ENCODE measurements at regions of chrX and their contacts with region 1.

Region 1: DNA sequence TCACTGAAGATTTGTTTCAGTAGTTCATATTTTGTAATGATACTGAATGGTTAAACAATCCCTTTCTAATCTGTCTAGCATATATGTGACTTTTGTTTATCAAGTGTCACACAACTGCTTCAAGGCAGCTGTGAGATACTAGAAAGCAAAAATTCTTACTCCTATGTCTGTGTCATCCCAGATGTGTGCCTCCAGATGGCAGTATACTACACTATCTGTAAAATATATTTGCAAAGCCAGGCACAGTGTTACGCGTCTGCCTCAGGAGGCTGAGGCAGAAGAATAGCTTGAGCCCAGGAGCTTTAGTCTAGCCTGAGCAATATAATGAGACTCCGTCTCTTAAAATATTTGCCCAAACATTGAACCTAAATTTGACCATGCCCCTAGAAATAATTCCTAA is 4.0 kb downstream of the NUDT10 start:
- DNase-seq: peak; percentile 7
- H3K4me3 Mint-ChIP-seq: no peak overlapping the region
- H3K27ac Mint-ChIP-seq: no peak overlapping the region
- H3K4me1 Mint-ChIP-seq: peaks cover 4% of the 10 kb centered on the region
- H3K27me3 Mint-ChIP-seq: peaks cover 12% of the 10 kb centered on the region

Region 2: DNA sequence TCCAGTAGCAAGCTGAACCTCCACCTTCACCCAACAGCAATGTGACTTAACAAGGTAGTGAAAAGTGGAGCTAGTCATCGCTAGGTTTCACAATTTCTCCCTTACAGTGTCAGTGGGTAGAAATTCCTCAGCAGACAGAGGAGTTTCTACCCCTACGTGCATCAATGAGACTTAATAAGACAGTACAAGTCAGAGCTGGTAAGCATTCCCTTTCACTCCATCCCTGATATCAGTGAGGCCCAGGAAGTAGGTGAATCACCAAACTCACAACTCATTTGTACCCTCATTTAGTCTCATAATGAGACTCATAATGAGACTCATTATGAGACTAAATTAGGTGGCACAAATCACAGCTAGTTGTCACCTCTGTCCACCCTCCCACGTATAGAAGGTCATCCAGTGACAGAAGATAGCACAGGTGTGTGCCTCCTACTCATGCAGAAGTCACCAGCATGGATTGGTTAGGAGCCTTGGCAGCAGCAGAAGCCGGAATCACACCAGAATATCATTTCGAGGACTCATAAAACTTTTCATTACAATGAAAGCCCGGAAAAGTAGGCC is 54.7 kb before region 1 on chrX:
- intact Hi-C with region 1: no loop called
- DNase-seq: no peak
- H3K4me3 Mint-ChIP-seq: no peak overlapping the region
- H3K27ac Mint-ChIP-seq: no peak overlapping the region
- H3K4me1 Mint-ChIP-seq: no peaks in the 10 kb centered on the region
- H3K27me3 Mint-ChIP-seq: no peaks in the 10 kb centered on the region

Region 3: DNA sequence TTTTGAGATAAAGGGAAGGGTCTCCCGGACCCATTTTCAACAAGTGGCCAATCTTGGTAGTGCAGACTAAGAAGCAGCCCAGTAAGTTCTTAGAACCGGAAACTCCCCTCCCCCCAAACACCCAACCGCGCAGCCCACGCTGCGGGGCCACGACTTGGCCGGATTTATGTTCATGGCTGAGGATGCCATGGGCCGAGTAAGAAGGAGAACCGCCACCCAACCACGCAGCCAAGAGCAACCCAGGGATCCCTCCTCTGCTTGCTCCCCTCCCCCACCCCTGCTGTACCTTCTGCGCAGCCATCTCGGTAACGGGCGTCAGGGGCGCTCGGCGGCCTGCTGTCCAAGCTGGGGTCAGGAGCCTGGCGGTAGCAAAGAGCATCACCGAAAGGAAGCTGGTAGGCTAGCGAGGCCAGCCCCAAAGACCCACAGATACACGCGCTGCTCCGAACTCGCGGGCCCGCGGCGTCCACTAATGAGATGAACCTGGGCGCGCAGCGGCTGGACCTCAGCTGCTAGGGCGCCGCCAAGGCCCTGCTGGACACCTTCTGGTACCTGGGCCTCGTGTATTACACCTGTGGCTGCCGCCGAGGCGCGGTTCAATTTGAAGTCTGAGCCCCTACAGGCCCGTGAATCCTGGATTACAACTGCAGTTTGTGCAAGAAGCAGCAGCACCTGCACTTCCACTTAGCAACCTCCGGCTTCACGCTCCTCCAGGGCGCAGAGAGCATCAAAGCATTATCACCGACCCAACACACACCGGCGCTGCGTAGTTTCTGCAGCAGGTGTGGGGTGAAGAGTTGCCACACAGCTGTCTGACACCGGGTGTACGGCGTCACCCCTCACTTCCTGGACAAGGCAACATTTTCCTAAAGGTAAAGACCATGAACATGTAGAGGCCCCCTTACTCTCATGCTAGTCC is 59.5 kb after region 1 on chrX:
- intact Hi-C with region 1: loop called (anchors 5 kb)
- DNase-seq: peak; percentile 29
- H3K4me3 Mint-ChIP-seq: peak overlapping the region; percentile 76
- H3K27ac Mint-ChIP-seq: peak overlapping the region; percentile 46
- H3K4me1 Mint-ChIP-seq: peaks cover 7% of the 10 kb centered on the region
- H3K27me3 Mint-ChIP-seq: no peaks in the 10 kb centered on the region

Region 4: DNA sequence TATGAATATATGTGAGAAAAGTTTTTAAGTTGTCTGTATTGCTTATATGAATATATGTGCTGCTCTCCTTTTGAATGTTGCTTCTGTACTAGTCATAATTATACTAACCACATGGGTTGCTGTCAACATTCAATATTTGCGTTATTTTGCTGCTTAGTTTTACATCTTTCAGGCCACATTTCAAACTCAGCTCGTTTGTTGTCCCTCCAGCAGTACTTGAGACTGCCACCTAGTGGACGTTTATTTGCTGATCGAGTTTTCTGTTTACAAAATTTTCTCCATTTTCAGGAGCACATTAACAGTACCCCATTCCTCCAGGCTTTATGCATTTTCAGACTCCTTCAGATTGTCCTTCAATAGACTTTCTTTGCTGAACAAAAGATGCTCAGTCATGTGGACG is 84.0 kb after region 1 on chrX:
- intact Hi-C with region 1: loop called (anchors 1 kb)
- DNase-seq: no peak
- H3K4me3 Mint-ChIP-seq: no peak overlapping the region
- H3K27ac Mint-ChIP-seq: no peak overlapping the region
- H3K4me1 Mint-ChIP-seq: peaks cover 8% of the 10 kb centered on the region
- H3K27me3 Mint-ChIP-seq: peaks cover 2% of the 10 kb centered on the region

Region 5: GRCh38 chrX:51461053-51462044 is 124.8 kb after region 1 on chrX:
- intact Hi-C with region 1: loop called (anchors 2 kb)
- DNase-seq: no peak
- H3K4me3 Mint-ChIP-seq: no peak overlapping the region
- H3K27ac Mint-ChIP-seq: no peak overlapping the region
- H3K4me1 Mint-ChIP-seq: no peaks in the 10 kb centered on the region
- H3K27me3 Mint-ChIP-seq: no peaks in the 10 kb centered on the region

Region 6: DNA sequence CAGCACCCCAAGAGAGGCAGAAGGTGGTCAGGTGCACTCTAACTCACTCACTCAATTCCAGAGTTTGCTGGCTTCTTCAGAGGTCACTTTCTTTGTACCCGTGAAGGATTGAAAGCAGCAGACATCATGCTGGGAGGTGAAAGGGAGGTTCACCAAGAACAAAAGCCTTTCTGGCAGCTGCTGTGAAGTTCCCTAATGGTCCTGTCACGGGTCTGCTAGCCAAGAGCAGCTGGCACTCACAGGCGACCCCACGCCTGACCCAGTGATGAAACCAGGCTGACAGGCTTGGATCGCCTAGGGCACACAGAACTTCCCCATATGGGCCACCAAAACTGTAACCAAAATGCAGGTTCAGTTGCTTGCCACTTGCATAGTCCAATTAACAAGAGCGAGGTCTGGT is 148.0 kb after region 1 on chrX:
- intact Hi-C with region 1: no loop called
- DNase-seq: no peak
- H3K4me3 Mint-ChIP-seq: no peak overlapping the region
- H3K27ac Mint-ChIP-seq: no peak overlapping the region
- H3K4me1 Mint-ChIP-seq: no peaks in the 10 kb centered on the region
- H3K27me3 Mint-ChIP-seq: no peaks in the 10 kb centered on the region

Region 7: GRCh38 chrX:51694254-51694653 is 357.7 kb after region 1 on chrX:
- intact Hi-C with region 1: no loop called
- DNase-seq: no peak
- H3K4me3 Mint-ChIP-seq: no peak overlapping the region
- H3K27ac Mint-ChIP-seq: no peak overlapping the region
- H3K4me1 Mint-ChIP-seq: no peaks in the 10 kb centered on the region
- H3K27me3 Mint-ChIP-seq: peaks cover 2% of the 10 kb centered on the region